Heart right ventricle (tissue), 16 donors: ENCODE measurements at regions of chr15 and their contacts with region 1.

Region 1: GRCh38 chr15:38563723-38564519 is 693 bp downstream of the RASGRP1 start:
- DNase-seq: peak; percentile 40 to 72
- ATAC-seq: peak; percentile 85 to 95 (median 89)
- H3K4me3 ChIP-seq: peak overlapping the region; percentile 38 to 71 (median 58)
- H3K27ac ChIP-seq: peak overlapping the region in 1 of 10 donors; percentile 90
- H3K4me1 ChIP-seq: peaks cover 0 to 28% (median 12%) of the 10 kb centered on the region in 9 donors
- H3K27me3 ChIP-seq: peaks cover 0 to 43% (median 36%) of the 10 kb centered on the region in 7 donors
- CTCF ChIP-seq: peak; percentile 69 to 95 (median 87)

Region 2: GRCh38 chr15:38624244-38625205 is 60.6 kb after region 1 on chr15:
- intact Hi-C with region 1: loop called in 5 of 10 experiments (anchors 2 to 5 kb)
- DNase-seq: no peak
- ATAC-seq: peak in 4 of 8 donors; percentile 34 to 49 (median 38)
- H3K4me3 ChIP-seq: no peak overlapping the region
- H3K27ac ChIP-seq: peak overlapping the region in 2 of 10 donors; percentile 31 to 35
- H3K4me1 ChIP-seq: peaks cover 0 to 32% (median 17%) of the 10 kb centered on the region in 9 donors
- H3K27me3 ChIP-seq: no peaks in the 10 kb centered on the region
- CTCF ChIP-seq: no peak

Region 3: DNA sequence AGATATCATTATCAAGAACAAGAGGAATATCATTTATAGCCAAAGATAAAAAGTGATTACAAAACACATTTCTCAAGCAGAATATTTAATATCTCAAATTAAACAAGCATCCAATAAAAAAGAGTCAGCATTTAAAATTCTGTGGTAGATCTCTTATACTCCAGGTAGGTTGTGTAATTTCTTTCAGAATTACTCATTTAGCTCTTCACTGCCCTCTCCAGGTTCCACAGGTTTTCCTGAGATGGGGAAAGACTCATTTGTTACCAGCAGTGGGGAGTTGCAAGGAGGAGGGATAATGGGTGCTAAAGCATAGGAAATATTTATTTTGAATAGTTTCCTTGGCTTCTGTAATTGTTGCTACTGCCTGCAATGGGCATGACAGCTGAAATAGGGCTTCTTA is 83.8 kb after region 1 on chr15:
- intact Hi-C with region 1: loop called in 3 of 10 experiments (anchors 5 to 10 kb)
- DNase-seq: no peak
- ATAC-seq: no peak
- H3K4me3 ChIP-seq: no peak overlapping the region
- H3K27ac ChIP-seq: no peak overlapping the region
- H3K4me1 ChIP-seq: peaks cover 0 to 7% (median 0%) of the 10 kb centered on the region in 9 donors
- H3K27me3 ChIP-seq: peaks cover 0 to 10% (median 0%) of the 10 kb centered on the region in 7 donors
- CTCF ChIP-seq: peak in 7 of 9 donors; percentile 18 to 45 (median 34)

Region 4: GRCh38 chr15:38690689-38691332 is 126.9 kb after region 1 on chr15:
- intact Hi-C with region 1: loop called in 4 of 10 experiments (anchors 5 to 10 kb)
- DNase-seq: peak; percentile 21 to 39
- ATAC-seq: peak in 4 of 8 donors; percentile 20 to 50 (median 34)
- H3K4me3 ChIP-seq: no peak overlapping the region
- H3K27ac ChIP-seq: no peak overlapping the region
- H3K4me1 ChIP-seq: peaks cover 0 to 17% (median 0%) of the 10 kb centered on the region in 9 donors
- H3K27me3 ChIP-seq: no peaks in the 10 kb centered on the region
- CTCF ChIP-seq: peak; percentile 59 to 88 (median 78)